ENCODE measurements at regions of chr16 and their contacts with region 1.

Region 1: GRCh38 chr16:1794221-1794860 is 836 bp upstream of the IGFALS start:
- DNase-seq: no peak
- H3K4me3 ChIP-seq: no peak overlapping the region
- H3K27ac ChIP-seq: no peak overlapping the region
- H3K4me1 ChIP-seq: no peaks in the 10 kb centered on the region
- H3K27me3 ChIP-seq: no peaks in the 10 kb centered on the region
- CTCF ChIP-seq: no peak

Region 2: DNA sequence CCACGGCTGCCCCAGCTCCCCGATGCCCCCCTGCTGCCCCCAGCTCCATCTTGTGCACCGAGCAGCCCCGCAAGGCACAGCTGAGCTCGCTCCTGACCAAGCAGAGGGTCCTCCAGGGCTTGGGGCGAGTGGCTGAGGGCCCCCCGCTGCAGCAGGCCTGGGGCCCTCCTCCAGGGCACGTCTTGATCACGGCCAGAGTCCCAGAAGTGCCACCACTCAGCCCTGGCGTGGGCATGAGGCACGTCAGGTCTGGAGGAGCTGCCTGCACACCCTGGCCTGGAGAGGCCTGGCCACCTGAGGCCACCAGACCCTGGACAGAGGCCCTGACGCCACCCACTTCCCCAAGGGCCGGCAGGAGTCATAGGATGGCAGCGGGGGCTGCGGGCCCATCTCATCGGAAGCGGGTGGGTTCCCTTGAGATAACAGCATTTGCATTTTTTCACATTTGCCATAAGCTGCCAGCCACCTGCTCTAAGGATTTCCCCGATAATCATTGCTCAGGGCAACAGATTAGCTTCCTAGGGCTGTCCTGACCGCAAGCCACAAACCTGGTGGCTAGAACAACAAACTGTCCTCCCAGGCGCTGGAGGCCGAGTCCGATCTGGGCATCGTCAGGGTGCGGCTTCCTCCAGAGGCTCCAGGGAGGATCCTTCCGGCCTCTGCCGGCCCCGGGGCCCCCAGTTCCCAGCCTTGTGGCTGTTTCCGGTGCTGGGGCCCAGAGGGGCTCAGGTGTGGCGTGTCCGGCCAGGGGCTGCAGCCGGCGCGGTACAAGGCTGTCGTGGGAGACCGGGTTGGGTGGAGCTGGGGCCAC is 674.4 kb before region 1 on chr16:
- CTCF ChIA-PET with region 1: no interaction called
- POLR2A ChIA-PET with region 1: no interaction called
- intact Hi-C with region 1: no loop called
- DNase-seq: no peak
- H3K4me3 ChIP-seq: no peak overlapping the region
- H3K27ac ChIP-seq: no peak overlapping the region
- H3K4me1 ChIP-seq: no peaks in the 10 kb centered on the region
- H3K27me3 ChIP-seq: no peaks in the 10 kb centered on the region
- CTCF ChIP-seq: no peak

Region 3: GRCh38 chr16:1745181-1745899 is 49.0 kb before region 1 on chr16:
- CTCF ChIA-PET with region 1: no interaction called
- POLR2A ChIA-PET with region 1: no interaction called
- intact Hi-C with region 1: no loop called
- DNase-seq: no peak
- H3K4me3 ChIP-seq: no peak overlapping the region
- H3K27ac ChIP-seq: no peak overlapping the region
- H3K4me1 ChIP-seq: no peaks in the 10 kb centered on the region
- H3K27me3 ChIP-seq: no peaks in the 10 kb centered on the region
- CTCF ChIP-seq: no peak

Region 4: DNA sequence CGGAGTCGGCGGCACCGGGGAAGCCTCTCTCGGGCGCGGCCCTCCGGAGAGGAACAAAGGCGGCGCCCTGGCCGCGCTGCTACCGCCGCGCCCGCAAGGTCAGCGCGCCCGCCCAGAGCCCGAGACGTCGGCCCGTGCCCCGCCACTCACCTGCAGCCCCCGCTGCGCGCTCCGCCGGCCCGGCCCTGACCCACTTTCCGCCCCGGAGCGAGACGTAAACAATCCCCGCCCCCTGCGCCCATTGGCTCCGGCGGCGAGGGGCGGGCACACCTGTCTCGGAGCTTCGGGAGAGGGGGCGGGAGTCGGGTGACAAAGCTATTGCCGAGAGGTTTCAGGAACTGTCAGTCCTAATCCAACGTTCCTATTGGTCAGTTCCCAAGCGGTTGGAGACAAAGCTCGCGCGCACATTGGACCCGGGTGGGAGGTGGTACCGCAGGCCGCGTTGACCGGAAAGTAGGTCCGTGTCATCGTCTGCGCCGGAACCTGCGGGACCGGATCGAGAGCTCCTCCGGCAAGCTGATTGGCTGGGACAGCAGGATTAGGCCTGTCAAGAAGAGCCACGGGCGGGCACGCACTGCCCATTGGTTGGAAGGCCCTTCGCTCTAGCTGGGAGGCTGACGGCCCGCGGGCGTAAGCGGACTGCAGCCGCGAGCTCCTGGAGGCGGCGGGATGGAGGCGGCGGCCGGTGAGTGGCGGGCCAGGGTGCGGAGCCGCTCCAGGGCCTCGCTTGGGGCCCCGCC is 11.8 kb before region 1 on chr16 and contains the starts of genes NUBP2 and SPSB3:
- CTCF ChIA-PET with region 1: no interaction called
- POLR2A ChIA-PET with region 1: interaction called, 12 read pairs
- intact Hi-C with region 1: no loop called
- DNase-seq: peak; percentile 100
- H3K4me3 ChIP-seq: peak within 1 kb of the TSS; percentile 90
- H3K27ac ChIP-seq: peak within 1 kb of the TSS; percentile 86
- H3K4me1 ChIP-seq: no peaks in the 10 kb centered on the region
- H3K27me3 ChIP-seq: no peaks in the 10 kb centered on the region
- CTCF ChIP-seq: no peak
- total RNA-seq, gene NUBP2: 76.0 and 76.6 TPM in 2 replicates
- total RNA-seq, gene SPSB3: 15.0 and 20.8 TPM in 2 replicates

Measured in A673 (cell line).